Heart left ventricle (tissue), 16 donors: ENCODE measurements at regions of chr1 and their contacts with region 1.

Region 1: DNA sequence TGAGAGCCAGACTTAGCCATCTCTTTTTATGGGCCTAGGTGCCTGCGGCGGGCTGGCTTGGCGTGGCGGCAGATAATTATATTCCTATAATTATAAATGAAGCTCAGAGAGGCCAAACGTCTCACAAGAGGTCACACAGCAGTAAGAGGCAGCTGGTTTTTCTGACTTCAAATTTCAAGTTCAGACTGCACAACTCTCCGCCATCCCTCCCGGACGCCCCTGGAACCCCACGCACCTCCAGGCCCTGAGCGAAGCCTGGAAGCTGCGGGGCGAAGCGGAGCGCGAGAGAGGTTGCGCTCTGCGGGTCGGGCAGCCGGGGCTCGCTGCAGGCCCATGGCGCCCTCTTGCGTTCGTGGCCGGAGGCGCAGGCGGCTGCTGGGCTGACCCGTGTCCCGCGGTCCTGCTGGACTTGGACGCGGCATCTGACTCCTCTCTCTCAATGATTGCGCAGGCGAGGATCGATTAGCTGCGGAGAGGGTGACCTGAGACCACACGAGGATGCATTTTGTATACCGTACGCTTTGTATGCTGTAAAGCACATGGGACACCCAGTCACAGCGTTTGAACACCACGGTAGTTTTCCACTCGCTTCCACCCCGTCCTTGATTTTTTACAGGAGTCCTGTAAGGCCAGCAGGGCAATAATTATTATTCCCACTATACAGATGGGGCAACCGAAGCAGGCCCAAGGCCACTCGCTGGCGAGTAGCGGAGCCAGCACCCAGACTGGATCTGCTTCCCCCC is 272.7 kb downstream of the FOXD2 start:
- DNase-seq: peak; percentile 64 to 88 (median 75)
- ATAC-seq: peak; percentile 79 to 93 (median 87)
- H3K4me3 ChIP-seq: peak overlapping the region in 10 of 12 donors; percentile 27 to 56 (median 46)
- H3K27ac ChIP-seq: no peak overlapping the region
- H3K4me1 ChIP-seq: peaks cover 7 to 32% (median 22%) of the 10 kb centered on the region in 12 donors
- H3K27me3 ChIP-seq: peaks cover 19 to 97% (median 74%) of the 10 kb centered on the region in 9 donors
- CTCF ChIP-seq: peak; percentile 96 to 100 (median 99)
- POLR2A ChIP-seq: no peak

Region 2: DNA sequence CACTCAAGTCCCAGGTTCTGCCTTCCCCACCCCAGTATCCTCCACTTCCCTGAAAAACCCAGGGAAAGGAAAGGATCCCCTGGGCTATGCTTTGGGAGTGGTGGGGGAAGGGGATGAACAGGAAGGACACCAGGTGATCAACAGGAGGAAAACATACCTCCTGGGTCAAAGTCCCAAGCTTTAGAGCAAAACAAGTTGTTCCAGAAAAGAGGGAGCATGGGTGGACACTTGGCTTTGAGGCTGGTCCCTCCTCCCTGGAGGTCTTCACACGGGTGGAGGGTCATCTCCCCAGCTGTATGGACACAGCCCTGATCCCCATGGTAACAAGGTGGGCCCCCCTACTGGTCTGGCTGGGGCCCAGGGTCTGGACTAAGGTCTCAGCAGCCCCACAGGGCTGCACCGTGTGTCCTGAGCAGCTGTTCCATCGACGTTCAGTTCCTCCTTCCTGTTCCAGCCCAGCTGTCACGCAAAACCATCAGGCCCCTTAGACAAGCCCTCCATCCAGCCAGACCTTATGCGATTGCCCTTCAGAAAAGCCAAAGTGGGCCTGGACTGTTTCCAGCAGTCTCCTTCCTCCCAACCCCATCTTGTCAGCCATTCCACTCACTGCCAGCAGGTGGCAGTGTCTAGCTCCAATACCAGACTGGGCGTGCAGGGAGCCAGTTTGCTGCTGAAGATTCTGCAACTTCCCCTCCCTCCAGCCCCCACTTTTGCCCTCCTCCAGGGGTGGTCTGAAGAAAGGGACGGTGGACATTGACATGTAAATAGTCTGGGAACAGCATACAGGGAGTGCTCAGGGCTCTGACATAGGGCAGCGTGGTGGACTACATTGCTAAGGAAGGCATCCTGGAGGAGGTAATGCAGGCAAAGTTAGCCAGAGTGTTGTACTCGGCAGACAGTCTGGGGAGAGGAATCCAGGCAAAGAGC is 517.8 kb before region 1 on chr1:
- intact Hi-C with region 1: loop called in 6 of 10 experiments (anchors 5 to 10 kb)
- DNase-seq: peak; percentile 71 to 85 (median 73)
- ATAC-seq: peak in 3 of 4 donors; percentile 51 to 67 (median 57)
- H3K4me3 ChIP-seq: no peak overlapping the region
- H3K27ac ChIP-seq: no peak overlapping the region
- H3K4me1 ChIP-seq: peaks cover 0 to 25% (median 14%) of the 10 kb centered on the region in 12 donors
- H3K27me3 ChIP-seq: peaks cover 0 to 6% (median 0%) of the 10 kb centered on the region in 9 donors
- CTCF ChIP-seq: peak; percentile 89 to 98 (median 94)
- POLR2A ChIP-seq: no peak

Region 3: GRCh38 chr1:47432071-47433036 is 278.1 kb before region 1 on chr1:
- intact Hi-C with region 1: loop called (anchors 1 to 5 kb)
- DNase-seq: peak; percentile 68 to 85 (median 73)
- ATAC-seq: peak; percentile 76 to 83 (median 79)
- H3K4me3 ChIP-seq: peak overlapping the region in 5 of 12 donors; percentile 22 to 42 (median 30)
- H3K27ac ChIP-seq: peak overlapping the region in 1 of 12 donors; percentile 40
- H3K4me1 ChIP-seq: peaks cover 4 to 50% (median 27%) of the 10 kb centered on the region in 12 donors
- H3K27me3 ChIP-seq: peaks cover 18 to 100% (median 76%) of the 10 kb centered on the region in 9 donors
- CTCF ChIP-seq: peak; percentile 54 to 83 (median 74)
- POLR2A ChIP-seq: no peak

Region 4: GRCh38 chr1:47449822-47450552 is 260.5 kb before region 1 on chr1:
- intact Hi-C with region 1: loop called in 1 of 10 experiments (anchors 5 kb)
- DNase-seq: peak in 3 of 5 donors; percentile 31 to 70 (median 50)
- ATAC-seq: peak in 3 of 4 donors; percentile 59 to 77 (median 70)
- H3K4me3 ChIP-seq: no peak overlapping the region
- H3K27ac ChIP-seq: no peak overlapping the region
- H3K4me1 ChIP-seq: peaks cover 0 to 11% (median 2%) of the 10 kb centered on the region in 12 donors
- H3K27me3 ChIP-seq: peaks cover 35 to 100% (median 78%) of the 10 kb centered on the region in 9 donors
- CTCF ChIP-seq: peak in 11 of 12 donors; percentile 26 to 58 (median 45)
- POLR2A ChIP-seq: no peak

Region 5: DNA sequence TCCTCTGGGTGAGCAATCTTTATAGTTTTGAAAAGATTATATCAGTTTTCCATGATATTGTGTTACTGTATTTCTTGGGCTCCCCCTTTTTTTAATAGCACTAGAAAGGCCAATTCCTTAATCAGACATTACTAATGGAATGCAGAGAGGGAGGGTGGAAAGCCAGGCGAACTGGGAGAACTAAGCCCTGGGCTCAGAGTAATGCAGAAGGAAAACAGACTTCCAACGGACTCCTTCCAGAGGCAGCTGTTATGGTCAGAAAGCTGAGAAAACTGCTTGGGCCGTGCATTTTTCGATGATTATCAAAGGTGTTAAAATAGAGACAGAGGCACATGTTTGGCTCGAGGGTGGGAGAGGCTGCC is 66.3 kb before region 1 on chr1:
- intact Hi-C with region 1: no loop called
- DNase-seq: no peak
- ATAC-seq: no peak
- H3K4me3 ChIP-seq: no peak overlapping the region
- H3K27ac ChIP-seq: peak overlapping the region in 4 of 12 donors; percentile 25 to 46 (median 35)
- H3K4me1 ChIP-seq: peaks cover 0 to 24% (median 0%) of the 10 kb centered on the region in 12 donors
- H3K27me3 ChIP-seq: peaks cover 0 to 9% (median 0%) of the 10 kb centered on the region in 9 donors
- CTCF ChIP-seq: no peak
- POLR2A ChIP-seq: no peak